Natural killer cell (primary cell): ENCODE measurements at regions of chr1 and their contacts with region 1.

Region 1: DNA sequence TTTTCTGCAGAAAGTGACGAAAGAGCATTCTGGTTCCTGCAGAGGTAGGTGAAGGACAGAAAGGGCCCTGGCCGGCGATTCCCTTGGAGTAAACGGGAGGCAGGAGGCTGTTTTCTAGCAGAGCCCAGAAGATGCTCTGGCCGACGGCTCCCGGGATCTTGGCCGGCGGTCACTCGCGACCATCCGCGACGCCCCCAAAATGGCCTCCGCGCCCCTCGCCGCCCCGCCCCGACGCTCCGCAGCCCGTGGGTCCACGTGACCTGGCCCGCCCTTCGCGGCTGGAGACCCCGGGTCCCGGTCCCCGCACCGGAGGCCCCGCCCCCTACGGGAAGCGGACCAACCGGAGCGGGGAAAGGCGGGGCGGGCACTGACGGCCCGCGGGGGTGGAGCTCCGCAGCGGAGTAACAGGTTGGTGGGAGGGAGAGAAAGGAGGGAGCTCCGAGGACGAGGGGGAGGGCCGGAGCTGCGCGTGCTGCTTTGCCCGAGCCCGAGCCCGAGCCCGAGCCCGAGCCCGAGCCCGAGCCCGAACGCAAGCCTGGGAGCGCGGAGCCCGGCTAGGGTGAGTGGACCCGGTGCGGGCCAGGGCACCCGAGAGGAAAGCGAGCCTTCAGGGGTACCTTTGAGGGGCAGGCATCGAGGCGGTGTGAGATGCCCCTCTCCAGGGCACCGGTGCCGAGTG is at the start of gene CGN:
- DNase-seq: peak; percentile 80 to 93
- ATAC-seq: peak; percentile 97 to 98 (median 98)
- H3K4me3 ChIP-seq: peak within 1 kb of the TSS; percentile 72
- H3K4me3 Mint-ChIP-seq: peak within 1 kb of the TSS; percentile 98
- H3K27ac ChIP-seq: peak within 1 kb of the TSS; percentile 2
- H3K27ac Mint-ChIP-seq: peak within 1 kb of the TSS; percentile 69 to 85
- H3K4me1 ChIP-seq: peaks cover 23% of the 10 kb centered on the region
- H3K4me1 Mint-ChIP-seq: peaks cover 8 to 19% of the 10 kb centered on the region in 2 donors
- H3K27me3 ChIP-seq: no peaks in the 10 kb centered on the region
- H3K27me3 Mint-ChIP-seq: peaks cover 0 to 4% of the 10 kb centered on the region in 2 donors
- CTCF ChIP-seq: no peak
- total RNA-seq, gene CGN: 0.07 to 0.80 TPM in 2 of 3 donors, not detected in the other

Region 2: DNA sequence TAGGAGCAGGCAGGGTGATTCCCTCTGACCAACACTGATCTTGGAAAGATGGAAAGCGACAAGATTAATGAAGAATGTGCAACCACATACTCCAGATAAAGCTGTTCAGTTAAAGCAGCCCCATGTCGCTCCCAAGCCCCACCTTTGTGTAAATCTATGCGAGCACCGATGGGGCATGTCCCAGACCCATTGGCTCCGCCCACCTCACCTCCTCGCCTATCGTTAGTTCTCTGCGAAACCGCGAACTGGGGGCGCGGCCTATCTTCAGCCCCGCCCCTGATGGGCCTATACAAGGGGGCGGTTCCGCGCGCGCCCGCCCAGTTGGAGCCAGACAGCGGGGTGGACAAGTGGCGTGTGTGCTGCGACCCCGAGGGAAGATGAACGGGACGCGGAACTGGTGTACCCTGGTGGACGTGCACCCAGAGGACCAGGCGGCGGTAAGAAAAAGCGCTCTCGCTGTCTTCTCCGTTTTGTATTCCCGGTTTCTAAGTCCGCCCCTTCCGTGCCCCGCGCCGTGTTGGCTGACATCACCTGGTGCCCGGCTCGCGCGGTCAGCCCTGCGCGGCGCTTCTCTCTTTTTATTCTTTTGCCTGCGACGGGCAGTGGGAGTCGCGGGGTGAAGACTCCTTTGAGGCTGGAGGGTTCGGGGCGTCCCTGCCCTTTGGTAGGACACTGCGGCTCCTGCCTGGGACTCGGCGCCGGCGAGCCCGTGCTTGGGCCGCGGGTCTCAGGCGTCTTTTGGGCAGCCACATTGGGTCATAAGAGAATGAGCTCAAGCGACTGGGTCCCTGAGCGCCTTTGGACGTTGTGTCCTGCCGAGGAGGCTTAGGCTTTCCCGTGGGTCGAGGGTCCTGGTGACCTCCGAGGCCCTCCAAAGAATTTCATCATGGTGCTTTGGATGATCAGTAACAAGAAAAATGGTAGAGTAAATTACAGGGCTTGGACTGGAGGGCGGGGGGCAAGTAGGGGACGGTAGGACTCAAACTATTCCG is 29.2 kb after region 1 on chr1 and contains the start of gene TUFT1:
- intact Hi-C with region 1: loop called (anchors 1 kb)
- DNase-seq: peak; percentile 92 to 97
- ATAC-seq: peak; percentile 98 to 99 (median 99)
- H3K4me3 ChIP-seq: peak within 1 kb of the TSS; percentile 73
- H3K4me3 Mint-ChIP-seq: peak within 1 kb of the TSS; percentile 99
- H3K27ac ChIP-seq: peak within 1 kb of the TSS; percentile 32
- H3K27ac Mint-ChIP-seq: peak within 1 kb of the TSS; percentile 88 to 91
- H3K4me1 ChIP-seq: peaks cover 21% of the 10 kb centered on the region
- H3K4me1 Mint-ChIP-seq: peaks cover 19 to 24% of the 10 kb centered on the region in 2 donors
- H3K27me3 ChIP-seq: peaks cover 4% of the 10 kb centered on the region
- H3K27me3 Mint-ChIP-seq: peaks cover 25% of the 10 kb centered on the region in 2 donors
- CTCF ChIP-seq: no peak
- total RNA-seq, gene TUFT1: 4.6 to 7.2 (median 5.0) TPM